ENCODE measurements at regions of chr12 and their contacts with region 1.

Region 1: GRCh38 chr12:131104463-131105350 is 151.0 kb downstream of the ADGRD1 start:
- DNase-seq: no peak
- H3K4me3 ChIP-seq: no peak overlapping the region
- H3K27ac ChIP-seq: peak overlapping the region in 1 of 4 donors; percentile 19
- H3K4me1 ChIP-seq: peaks cover 7 to 18% (median 16%) of the 10 kb centered on the region in 4 donors
- H3K27me3 ChIP-seq: no peaks in the 10 kb centered on the region
- CTCF ChIP-seq: peak; percentile 82 to 92 (median 88)
- EP300 ChIP-seq: no peak
- POLR2A ChIP-seq: no peak

Region 2: GRCh38 chr12:131990066-131990979 is 885.6 kb after region 1 on chr12:
- intact Hi-C with region 1: loop called (anchors 10 kb)
- DNase-seq: no peak
- H3K4me3 ChIP-seq: no peak overlapping the region
- H3K27ac ChIP-seq: no peak overlapping the region
- H3K4me1 ChIP-seq: peaks cover 0 to 5% (median 0%) of the 10 kb centered on the region in 4 donors
- H3K27me3 ChIP-seq: no peaks in the 10 kb centered on the region
- CTCF ChIP-seq: no peak
- EP300 ChIP-seq: no peak
- POLR2A ChIP-seq: no peak

Measured in esophagus muscularis mucosa (tissue), 4 donors.